ENCODE measurements at regions of chr11 and their contacts with region 1.

Region 1: DNA sequence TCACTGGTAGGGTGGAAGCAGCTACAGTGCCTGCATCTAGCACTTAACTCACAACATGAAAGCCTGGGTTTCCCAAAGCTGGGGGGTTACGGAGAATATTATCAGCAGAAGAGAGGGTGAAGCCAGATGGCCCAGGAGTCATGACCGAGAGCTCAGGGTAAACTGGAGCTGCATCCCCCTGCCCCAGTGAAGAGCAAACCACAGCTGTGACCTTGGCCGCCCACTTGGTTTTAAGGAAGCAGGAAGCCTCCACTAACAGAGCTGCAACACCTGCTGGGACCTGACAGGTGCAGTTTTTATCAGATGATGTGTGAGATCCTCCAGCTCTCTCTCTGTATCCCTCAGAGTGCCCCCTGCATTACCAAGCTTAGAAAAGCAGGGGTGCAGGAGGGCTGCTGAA is 20.9 kb downstream of the TCP11L1 start:
- DNase-seq: no peak
- ATAC-seq: peak; percentile 19; the same call in 1 of the 3 replicates
- H3K4me3 ChIP-seq: no peak overlapping the region
- H3K27ac ChIP-seq: no peak overlapping the region
- H3K4me1 ChIP-seq: peaks cover 22% of the 10 kb centered on the region
- H3K27me3 ChIP-seq: no peaks in the 10 kb centered on the region
- CTCF ChIP-seq: no peak
- EP300 ChIP-seq: no peak
- POLR2A ChIP-seq: no peak
- RAD21 ChIP-seq: no peak

Region 2: GRCh38 chr11:33039274-33040032 is 20.8 kb before region 1 on chr11 and contains the start of gene TCP11L1:
- CTCF ChIA-PET with region 1: no interaction called
- POLR2A ChIA-PET with region 1: interaction called, 22 read pairs
- in situ Hi-C with region 1: no loop called
- intact Hi-C with region 1: no loop called
- DNase-seq: peak; percentile 83
- ATAC-seq: peak; percentile 92
- H3K4me3 ChIP-seq: peak within 1 kb of the TSS; percentile 74 to 90 (median 78)
- H3K27ac ChIP-seq: peak within 1 kb of the TSS; percentile 97
- H3K4me1 ChIP-seq: peaks cover 46% of the 10 kb centered on the region
- H3K27me3 ChIP-seq: no peaks in the 10 kb centered on the region
- CTCF ChIP-seq: peak; percentile 60
- EP300 ChIP-seq: no peak
- POLR2A ChIP-seq: peak; percentile 47 to 54; a peak in 2 of 4 replicates
- RAD21 ChIP-seq: 0 out of 2 replicates have a peak, but pooled peaks have one; percentile 10
- total RNA-seq, gene TCP11L1: 10.1 and 14.0 TPM in 2 replicates

Region 3: GRCh38 chr11:33045551-33046255 is 14.6 kb before region 1 on chr11:
- CTCF ChIA-PET with region 1: no interaction called
- POLR2A ChIA-PET with region 1: interaction called, 22 read pairs
- in situ Hi-C with region 1: no loop called
- intact Hi-C with region 1: loop called (anchors 1 kb)
- DNase-seq: peak; percentile 53
- ATAC-seq: peak; percentile 68
- H3K4me3 ChIP-seq: no peak overlapping the region
- H3K27ac ChIP-seq: peak overlapping the region; percentile 17
- H3K4me1 ChIP-seq: peaks cover 58% of the 10 kb centered on the region
- H3K27me3 ChIP-seq: no peaks in the 10 kb centered on the region
- CTCF ChIP-seq: no peak
- EP300 ChIP-seq: no peak
- POLR2A ChIP-seq: no peak
- RAD21 ChIP-seq: no peak